HCT116 (cell line): ENCODE measurements at regions of chr7 and their contacts with region 1.

Region 1: DNA sequence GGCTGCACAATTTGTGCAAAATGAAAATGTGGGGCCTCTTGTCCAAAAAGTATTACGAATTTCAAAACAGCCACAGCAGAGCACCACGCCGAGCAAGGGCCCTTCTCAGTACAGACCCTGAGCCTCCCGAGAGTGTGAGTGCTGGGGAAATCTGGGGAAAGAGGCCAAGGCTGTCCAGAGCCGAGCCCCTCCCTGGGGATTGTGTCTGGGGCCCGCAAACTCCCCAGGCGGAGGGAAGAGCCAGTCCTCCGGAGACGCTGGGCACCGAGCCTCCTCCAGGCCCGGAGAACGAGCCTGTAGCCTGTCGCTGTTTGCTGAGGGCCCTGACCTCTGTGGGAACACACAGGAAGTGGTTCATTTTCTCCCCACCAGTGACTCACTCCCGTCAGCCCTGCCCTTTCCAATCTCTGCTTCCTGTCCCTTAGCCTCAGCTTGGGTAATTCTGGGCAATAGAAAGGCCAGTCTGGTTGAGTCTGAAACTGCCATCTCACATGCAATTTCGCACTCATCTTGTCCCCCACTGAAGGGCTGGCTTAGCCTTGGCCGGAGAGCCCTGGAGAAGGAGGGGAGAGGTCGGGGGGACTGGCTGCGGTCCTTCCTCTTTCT is 19.5 kb upstream of the GNA12 start:
- DNase-seq: peak; percentile 69
- ATAC-seq: peak; percentile 94
- H3K4me3 ChIP-seq: peak overlapping the region; percentile 59 to 72
- H3K27ac ChIP-seq: peak overlapping the region; percentile 79
- H3K4me1 ChIP-seq: peaks cover 18 to 27% of the 10 kb centered on the region in 2 experiments
- H3K27me3 ChIP-seq: no peaks in the 10 kb centered on the region
- CTCF ChIP-seq: no peak
- POLR2A ChIP-seq: peak; percentile 73
- RAD21 ChIP-seq: no peak

Region 2: DNA sequence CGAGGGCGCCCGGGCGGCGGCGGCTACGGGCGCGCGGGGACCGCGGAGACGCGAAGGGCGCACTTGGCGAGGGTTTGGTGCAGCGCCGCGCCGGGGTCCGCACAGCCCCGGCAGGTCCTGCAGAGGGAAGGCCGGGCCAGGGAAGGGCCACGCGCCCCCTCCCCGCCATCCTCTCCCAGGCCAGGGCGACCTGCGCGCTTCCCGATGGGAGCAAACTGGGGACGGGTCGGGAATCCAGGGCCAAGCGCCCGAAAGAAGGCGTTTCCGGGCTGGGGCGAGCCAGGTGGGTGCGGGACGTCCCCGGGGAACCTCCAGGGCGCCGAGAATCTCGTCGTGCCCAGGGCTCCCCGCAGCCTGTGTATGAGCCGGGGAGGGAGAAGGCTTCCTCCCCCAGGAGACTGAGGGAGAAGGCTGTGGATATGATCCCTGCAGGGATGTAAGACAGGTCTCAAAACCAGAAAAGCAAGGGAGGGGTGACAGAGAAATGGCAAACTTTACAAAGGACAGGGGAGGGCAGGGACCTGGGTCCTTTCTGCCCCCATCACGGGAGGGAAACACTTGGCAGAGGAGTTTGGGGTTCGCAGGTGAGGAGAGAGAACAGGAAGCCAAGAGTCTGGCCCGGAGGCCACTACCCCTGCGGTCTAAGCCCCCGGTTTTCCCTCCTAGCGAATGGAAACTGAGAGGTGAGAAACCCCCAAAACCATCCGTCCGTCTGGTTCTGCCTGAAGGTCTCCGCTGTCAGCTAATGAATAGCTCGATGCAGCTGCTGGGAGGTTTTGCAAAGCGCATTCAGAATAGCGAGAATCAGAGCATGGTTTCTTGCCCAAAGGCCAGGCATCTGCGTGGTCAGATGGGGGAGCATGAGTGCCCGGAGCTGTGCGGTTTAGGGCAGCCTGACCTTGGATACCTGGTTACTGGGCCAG is 174.9 kb before region 1 on chr7:
- CTCF ChIA-PET with region 1: no interaction called
- POLR2A ChIA-PET with region 1: no interaction called
- RAD21 ChIA-PET with region 1: no interaction called
- intact Hi-C with region 1: no loop called
- DNase-seq: no peak
- ATAC-seq: no peak
- H3K4me3 ChIP-seq: no peak overlapping the region
- H3K27ac ChIP-seq: no peak overlapping the region
- H3K4me1 ChIP-seq: peaks cover 10 to 18% of the 10 kb centered on the region in 2 experiments; a peak in 3 of 4 replicates
- H3K27me3 ChIP-seq: no peaks in the 10 kb centered on the region
- CTCF ChIP-seq: no peak
- POLR2A ChIP-seq: no peak
- RAD21 ChIP-seq: no peak

Region 3: GRCh38 chr7:3399858-3400257 is 536.3 kb after region 1 on chr7:
- CTCF ChIA-PET with region 1: no interaction called
- POLR2A ChIA-PET with region 1: no interaction called
- RAD21 ChIA-PET with region 1: no interaction called
- intact Hi-C with region 1: loop called (anchors 5 kb)
- DNase-seq: peak; percentile 49
- ATAC-seq: peak; percentile 99
- H3K4me3 ChIP-seq: no peak overlapping the region
- H3K27ac ChIP-seq: no peak overlapping the region
- H3K4me1 ChIP-seq: no peaks in the 10 kb centered on the region
- H3K27me3 ChIP-seq: peaks cover 8% of the 10 kb centered on the region; the same call in 1 of the 2 replicates
- CTCF ChIP-seq: peak; percentile 56 to 94 (median 59)
- POLR2A ChIP-seq: no peak
- RAD21 ChIP-seq: peak; percentile 51

Region 4: DNA sequence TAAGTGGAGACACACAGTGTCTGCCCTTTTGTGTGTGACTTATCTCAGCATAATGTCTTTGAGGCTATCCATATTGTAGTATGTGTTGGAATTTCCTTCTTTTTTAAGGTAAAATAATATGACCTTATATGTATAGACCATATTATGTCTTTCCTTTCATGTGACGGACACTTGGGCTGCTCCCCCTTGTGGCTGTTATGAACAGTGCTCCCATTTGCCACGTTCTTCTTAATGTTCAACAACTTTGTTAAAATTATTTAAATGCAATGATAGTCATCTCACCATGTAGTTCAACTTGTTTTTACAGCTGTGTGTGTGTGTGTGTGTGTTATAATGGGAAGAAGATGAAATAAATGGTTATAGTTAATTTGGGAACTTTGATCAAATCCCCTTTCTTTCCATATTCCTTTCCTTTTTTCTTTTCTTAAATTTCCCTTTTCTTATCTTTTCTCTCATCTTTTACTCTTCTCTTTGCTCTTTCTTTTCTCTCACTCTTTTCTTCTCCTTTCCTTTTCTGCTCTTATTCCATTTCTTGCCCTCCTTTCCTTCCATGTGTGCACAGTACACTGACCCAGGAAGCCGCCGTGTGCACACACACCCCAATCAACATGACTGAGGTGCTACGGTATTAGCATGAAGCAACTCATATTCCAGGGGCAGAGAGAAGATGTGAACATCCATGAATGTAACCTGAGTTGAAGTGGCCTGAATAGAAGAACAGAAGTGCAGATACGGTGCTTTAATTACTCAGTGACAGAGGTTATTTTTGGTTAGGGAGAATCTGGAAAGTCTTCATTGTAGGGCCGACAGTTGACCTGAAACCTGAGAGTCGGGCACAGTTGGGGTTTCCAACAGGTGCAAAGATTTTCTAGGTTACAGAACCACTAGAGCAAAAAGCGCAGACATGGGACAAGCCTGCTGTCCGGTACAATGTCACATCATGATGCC is 1034.1 kb after region 1 on chr7:
- CTCF ChIA-PET with region 1: no interaction called
- POLR2A ChIA-PET with region 1: no interaction called
- RAD21 ChIA-PET with region 1: no interaction called
- intact Hi-C with region 1: loop called (anchors 5 kb)
- DNase-seq: peak; percentile 29
- ATAC-seq: peak; percentile 73
- H3K4me3 ChIP-seq: no peak overlapping the region
- H3K27ac ChIP-seq: no peak overlapping the region
- H3K4me1 ChIP-seq: no peaks in the 10 kb centered on the region
- H3K27me3 ChIP-seq: peaks cover 41% of the 10 kb centered on the region
- CTCF ChIP-seq: peak; percentile 33 to 90 (median 71); a peak in 5 of 6 replicates
- POLR2A ChIP-seq: no peak
- RAD21 ChIP-seq: peak; percentile 59

Region 5: DNA sequence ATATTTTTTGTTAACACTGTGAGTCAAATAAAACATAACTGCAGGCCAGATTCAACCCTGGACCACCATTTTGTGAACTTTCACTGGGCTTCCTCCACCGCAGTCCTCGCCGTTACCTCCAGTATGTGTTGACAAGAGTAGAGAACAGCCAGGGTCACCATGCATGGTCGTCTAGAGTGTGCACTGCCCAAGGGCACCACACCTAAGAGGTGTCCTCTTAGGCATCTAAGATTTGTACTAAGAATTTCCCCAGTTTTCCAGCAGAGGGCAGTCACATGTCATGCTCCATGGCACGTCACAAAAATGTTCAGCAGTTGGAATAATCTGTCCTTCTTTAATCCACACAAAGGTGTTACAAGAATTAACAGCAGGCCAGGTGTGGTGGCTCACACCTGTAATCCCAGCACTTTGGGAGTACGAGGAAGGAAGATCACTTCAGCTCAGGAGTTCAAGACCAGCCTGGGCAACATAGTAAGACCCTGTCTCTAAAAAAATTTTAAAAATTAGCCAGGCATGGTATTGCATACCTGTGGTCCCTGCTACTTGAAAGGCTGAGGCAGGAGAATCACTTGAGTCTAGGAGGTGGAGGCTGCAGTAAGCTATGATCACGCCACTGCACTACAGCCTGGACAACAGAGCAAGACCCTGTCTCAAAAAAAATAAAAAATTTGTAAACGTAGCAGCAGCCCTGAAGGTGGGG is 1747.4 kb after region 1 on chr7:
- CTCF ChIA-PET with region 1: no interaction called
- POLR2A ChIA-PET with region 1: no interaction called
- RAD21 ChIA-PET with region 1: no interaction called
- intact Hi-C with region 1: loop called (anchors 10 kb)
- DNase-seq: peak; percentile 73
- ATAC-seq: peak; percentile 98
- H3K4me3 ChIP-seq: no peak overlapping the region
- H3K27ac ChIP-seq: no peak overlapping the region
- H3K4me1 ChIP-seq: peaks cover 0 to 5% of the 10 kb centered on the region in 2 experiments; a peak in 1 of 4 replicates
- H3K27me3 ChIP-seq: no peaks in the 10 kb centered on the region
- CTCF ChIP-seq: peak; percentile 72 to 92 (median 74)
- POLR2A ChIP-seq: no peak
- RAD21 ChIP-seq: peak; percentile 96